ENCODE measurements at regions of chr12 and their contacts with region 1.

Region 1: GRCh38 chr12:38921025-38921677 is 15.8 kb upstream of the CPNE8 start:
- DNase-seq: peak; percentile 53
- ATAC-seq: peak; percentile 64
- H3K4me3 Mint-ChIP-seq: no peak overlapping the region
- H3K27ac Mint-ChIP-seq: no peak overlapping the region
- H3K4me1 Mint-ChIP-seq: no peaks in the 10 kb centered on the region
- H3K27me3 Mint-ChIP-seq: no peaks in the 10 kb centered on the region
- CTCF ChIP-seq: peak; percentile 41

Region 2: GRCh38 chr12:38850476-38850875 is 70.7 kb before region 1 on chr12:
- CTCF ChIA-PET with region 1: no interaction called
- POLR2A ChIA-PET with region 1: no interaction called
- DNase-seq: no peak
- ATAC-seq: no peak
- H3K4me3 Mint-ChIP-seq: no peak overlapping the region
- H3K27ac Mint-ChIP-seq: no peak overlapping the region
- H3K4me1 Mint-ChIP-seq: peaks cover 4% of the 10 kb centered on the region
- H3K27me3 Mint-ChIP-seq: no peaks in the 10 kb centered on the region
- CTCF ChIP-seq: no peak

Region 3: DNA sequence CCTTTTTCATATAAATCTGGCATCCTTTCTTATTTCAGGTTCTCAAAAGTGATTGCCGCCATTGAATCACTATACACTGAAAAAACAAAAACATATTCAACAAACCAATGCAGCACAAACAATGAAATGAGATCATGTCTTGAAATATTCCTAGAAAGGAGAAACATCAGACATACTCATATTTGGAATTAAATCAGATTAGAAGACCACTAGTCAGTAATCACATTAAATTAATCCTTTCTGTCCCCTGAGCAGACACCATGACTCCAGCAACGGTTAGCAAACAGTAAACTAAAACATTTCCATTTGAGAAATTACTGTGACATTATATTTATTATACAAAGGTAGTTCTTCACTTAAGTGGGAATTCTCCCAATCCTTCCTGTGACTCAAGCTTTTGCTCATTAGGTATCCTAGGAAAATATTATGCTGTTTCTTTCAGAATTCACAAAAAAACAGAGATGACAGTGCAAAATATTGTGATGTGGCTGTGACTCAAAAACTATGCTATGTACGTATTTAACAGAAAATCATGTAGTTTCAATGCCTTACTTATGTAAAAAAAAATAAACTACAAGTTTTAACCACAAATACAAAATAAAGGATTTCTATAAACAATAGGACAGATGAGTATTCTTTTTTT is 45.4 kb before region 1 on chr12:
- CTCF ChIA-PET with region 1: no interaction called
- POLR2A ChIA-PET with region 1: no interaction called
- DNase-seq: no peak
- ATAC-seq: no peak
- H3K4me3 Mint-ChIP-seq: no peak overlapping the region
- H3K27ac Mint-ChIP-seq: no peak overlapping the region
- H3K4me1 Mint-ChIP-seq: peaks cover 12% of the 10 kb centered on the region
- H3K27me3 Mint-ChIP-seq: no peaks in the 10 kb centered on the region
- CTCF ChIP-seq: no peak

Region 4: DNA sequence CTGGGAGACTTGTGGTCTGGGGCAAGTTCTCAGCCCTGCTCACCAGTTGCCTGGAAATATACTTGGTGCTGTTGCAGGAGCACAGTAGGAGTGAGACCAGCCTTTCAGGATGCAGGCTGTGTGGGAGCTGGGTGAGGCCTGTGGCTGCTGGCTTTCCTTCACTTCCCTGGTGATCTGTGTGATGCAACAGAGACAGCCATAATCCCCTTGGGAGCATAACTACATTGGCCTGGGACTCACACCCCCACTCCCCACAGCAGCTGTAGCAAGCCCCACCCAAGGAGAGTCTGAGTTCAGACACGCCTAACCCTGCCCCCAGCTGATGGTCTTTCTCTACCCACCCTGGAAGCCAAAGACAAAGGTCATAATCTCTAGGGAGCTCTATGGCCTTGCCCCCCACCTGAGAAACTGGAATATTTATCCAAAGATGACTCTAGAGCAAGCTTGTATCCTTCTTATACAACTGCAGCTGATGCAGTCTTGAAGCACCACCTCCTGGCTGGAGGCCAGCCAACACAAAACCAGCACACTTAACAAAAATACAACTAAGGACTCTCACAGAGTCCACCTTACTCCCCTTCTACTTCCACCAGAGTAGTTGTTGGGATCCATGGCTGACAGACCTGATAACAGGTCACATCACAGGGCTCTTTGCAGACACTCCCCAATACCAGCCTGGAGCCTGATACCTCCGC is 174.6 kb after region 1 on chr12:
- CTCF ChIA-PET with region 1: interaction called, 31 read pairs
- POLR2A ChIA-PET with region 1: no interaction called
- DNase-seq: no peak
- ATAC-seq: peak; percentile 44
- H3K4me3 Mint-ChIP-seq: no peak overlapping the region
- H3K27ac Mint-ChIP-seq: no peak overlapping the region
- H3K4me1 Mint-ChIP-seq: peaks cover 27% of the 10 kb centered on the region
- H3K27me3 Mint-ChIP-seq: no peaks in the 10 kb centered on the region; the same call in 1 of the 2 replicates
- CTCF ChIP-seq: no peak

Region 5: DNA sequence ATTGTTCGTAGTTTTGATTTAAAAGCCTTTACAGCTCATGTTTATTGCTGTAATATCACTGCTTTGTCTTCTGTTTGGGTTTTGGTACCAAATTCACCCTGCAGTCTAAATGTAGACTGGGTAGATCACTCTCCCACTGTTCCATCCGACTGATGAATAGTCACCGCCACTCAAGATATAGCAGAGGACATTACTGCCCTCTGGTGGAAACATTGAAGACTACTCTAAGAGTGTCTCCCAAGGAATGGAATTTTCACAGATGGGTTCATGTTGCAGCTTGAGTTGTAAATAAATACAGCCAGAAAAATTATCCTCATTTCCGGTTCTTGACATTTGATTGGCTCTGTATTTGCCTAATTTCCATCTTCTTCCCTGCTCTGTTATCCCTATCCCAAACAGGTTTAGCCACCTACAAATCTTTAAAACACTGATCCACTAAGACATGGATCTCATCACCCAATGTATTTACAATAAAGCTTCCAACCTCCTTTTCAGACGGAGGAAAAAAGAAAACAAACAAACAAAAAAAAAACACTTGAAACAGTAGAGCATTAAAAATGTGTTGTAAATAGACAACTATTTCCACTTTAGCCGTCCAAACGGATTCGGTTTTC is 182.5 kb after region 1 on chr12:
- CTCF ChIA-PET with region 1: interaction called, 56 read pairs
- POLR2A ChIA-PET with region 1: no interaction called
- DNase-seq: no peak
- ATAC-seq: peak; percentile 96
- H3K4me3 Mint-ChIP-seq: no peak overlapping the region
- H3K27ac Mint-ChIP-seq: no peak overlapping the region
- H3K4me1 Mint-ChIP-seq: peaks cover 23% of the 10 kb centered on the region
- H3K27me3 Mint-ChIP-seq: no peaks in the 10 kb centered on the region
- CTCF ChIP-seq: peak; percentile 69